Panc1 (cell line): ENCODE measurements at regions of chr1 and their contacts with region 1.

Region 1: GRCh38 chr1:84506002-84506728 is at the starts of genes GNG5 and SPATA1:
- DNase-seq: peak; percentile 94
- ATAC-seq: peak; percentile 95
- H3K4me3 ChIP-seq: peak within 1 kb of the TSS; percentile 79 to 91
- H3K27ac ChIP-seq: peak within 1 kb of the TSS; percentile 98
- H3K4me1 ChIP-seq: peaks cover 32% of the 10 kb centered on the region
- H3K27me3 ChIP-seq: no peaks in the 10 kb centered on the region
- CTCF ChIP-seq: no peak
- total RNA-seq, gene GNG5: 283 TPM
- total RNA-seq, gene SPATA1: 5.0 TPM

Region 2: DNA sequence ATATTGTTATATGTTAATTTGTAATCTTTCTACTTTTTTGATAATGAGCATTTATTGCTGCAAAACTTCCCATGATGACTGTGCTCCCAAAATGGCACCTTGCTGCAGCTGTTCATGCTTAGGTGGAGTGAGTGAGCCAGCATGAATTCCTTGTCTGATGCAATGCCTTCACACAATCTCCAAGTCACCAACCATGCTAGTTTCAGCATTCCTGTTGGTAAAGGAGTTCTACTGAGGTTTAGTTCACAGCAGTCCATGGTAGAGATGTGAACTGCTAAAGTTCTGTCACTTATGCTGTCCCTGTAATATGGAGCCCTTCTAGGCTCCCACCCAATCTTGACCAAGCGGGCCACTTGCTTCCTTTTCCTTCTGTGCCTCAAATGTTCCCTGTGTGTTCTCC is 388.3 kb before region 1 on chr1:
- CTCF ChIA-PET with region 1: no interaction called
- POLR2A ChIA-PET with region 1: interaction called, 18 read pairs
- in situ Hi-C with region 1: no loop called
- intact Hi-C with region 1: no loop called
- DNase-seq: no peak
- ATAC-seq: no peak
- H3K4me3 ChIP-seq: no peak overlapping the region
- H3K27ac ChIP-seq: no peak overlapping the region
- H3K4me1 ChIP-seq: no peaks in the 10 kb centered on the region
- H3K27me3 ChIP-seq: no peaks in the 10 kb centered on the region
- CTCF ChIP-seq: no peak; the same call in 1 of the 2 replicates

Region 3: DNA sequence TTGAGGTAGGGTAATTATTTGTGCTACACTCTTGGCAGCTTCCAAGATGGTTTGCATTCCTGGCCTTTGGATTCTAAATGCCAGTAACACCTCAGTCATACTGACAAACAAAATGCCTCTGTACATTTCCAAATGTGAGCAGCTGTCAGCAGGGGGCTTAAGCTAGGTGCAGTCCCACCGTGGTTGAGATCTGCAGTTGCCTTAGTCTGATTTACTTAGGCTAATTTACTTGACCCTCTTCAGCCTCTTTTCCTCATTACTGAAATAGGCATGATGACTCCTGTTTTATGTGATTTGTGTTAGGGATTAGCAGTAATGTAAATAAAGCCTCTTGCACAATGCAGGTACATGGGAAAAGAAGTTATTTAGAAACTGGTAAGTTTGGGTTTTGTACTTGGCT is 13.4 kb before region 1 on chr1:
- CTCF ChIA-PET with region 1: interaction called, 5 read pairs
- POLR2A ChIA-PET with region 1: interaction called, 3 read pairs
- in situ Hi-C with region 1: no loop called
- intact Hi-C with region 1: loop called (anchors 1 kb)
- DNase-seq: no peak
- ATAC-seq: no peak
- H3K4me3 ChIP-seq: no peak overlapping the region
- H3K27ac ChIP-seq: no peak overlapping the region
- H3K4me1 ChIP-seq: no peaks in the 10 kb centered on the region
- H3K27me3 ChIP-seq: no peaks in the 10 kb centered on the region
- CTCF ChIP-seq: 0 out of 2 replicates have a peak, but pooled peaks have one; percentile 28

Region 4: GRCh38 chr1:84541679-84542078 is 35.5 kb after region 1 on chr1:
- CTCF ChIA-PET with region 1: no interaction called
- POLR2A ChIA-PET with region 1: interaction called, 12 read pairs
- in situ Hi-C with region 1: no loop called
- intact Hi-C with region 1: no loop called
- DNase-seq: peak; percentile 17
- ATAC-seq: peak; percentile 61; the same call in 1 of the 2 replicates
- H3K4me3 ChIP-seq: no peak overlapping the region
- H3K27ac ChIP-seq: no peak overlapping the region; the same call in 1 of the 2 replicates
- H3K4me1 ChIP-seq: peaks cover 17% of the 10 kb centered on the region
- H3K27me3 ChIP-seq: no peaks in the 10 kb centered on the region
- CTCF ChIP-seq: peak; percentile 83

Region 5: DNA sequence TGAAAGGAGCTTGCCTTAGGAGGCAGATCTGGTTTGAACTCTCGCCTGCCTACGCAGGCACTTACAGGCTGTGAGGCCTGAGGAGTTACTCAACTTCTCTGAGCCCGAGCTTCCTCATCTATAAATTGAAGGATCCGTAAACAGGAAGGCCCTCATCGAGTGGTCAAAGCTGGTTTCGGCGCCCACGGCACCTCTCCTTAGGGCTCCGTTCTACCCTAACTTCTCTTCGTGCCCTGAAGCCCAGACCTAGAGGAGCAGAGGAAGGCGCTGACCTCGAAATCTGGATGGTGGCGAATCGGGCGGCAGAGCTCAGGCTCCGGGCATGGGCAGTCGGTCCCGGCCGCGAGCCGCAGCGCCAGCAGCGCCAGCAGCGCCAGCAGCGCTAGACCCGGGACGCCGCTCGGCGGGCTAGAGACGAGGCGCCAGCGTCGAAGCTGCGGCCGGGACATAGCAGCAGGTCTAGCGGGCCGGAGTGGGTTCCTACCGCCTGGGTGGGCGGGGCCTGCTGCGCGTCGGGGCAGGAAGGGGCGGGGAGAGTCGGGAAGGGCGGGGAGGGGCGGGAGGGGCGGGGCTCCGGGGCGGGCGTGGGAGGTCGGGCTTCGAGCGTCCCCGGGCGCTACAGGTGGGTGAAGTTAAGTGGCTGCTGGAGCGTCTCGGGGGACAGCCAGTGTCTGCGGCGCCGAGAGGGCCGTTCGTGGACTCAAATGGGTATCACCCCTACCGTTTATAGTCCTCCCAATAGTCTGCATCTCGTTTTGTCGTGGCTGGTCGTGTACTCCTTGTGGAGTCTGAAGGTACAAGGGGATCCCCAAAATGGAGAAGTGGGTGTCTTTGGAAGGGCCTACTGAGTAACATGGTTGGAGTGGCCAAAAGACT is 68.0 kb after region 1 on chr1 and contains the start of gene CTBS:
- CTCF ChIA-PET with region 1: interaction called, 4 read pairs
- POLR2A ChIA-PET with region 1: interaction called, 10 read pairs
- in situ Hi-C with region 1: no loop called
- intact Hi-C with region 1: loop called (anchors 2 kb)
- DNase-seq: peak; percentile 74
- ATAC-seq: peak; percentile 97
- H3K4me3 ChIP-seq: peak within 1 kb of the TSS; percentile 66 to 81
- H3K27ac ChIP-seq: peak within 1 kb of the TSS; percentile 98
- H3K4me1 ChIP-seq: peaks cover 33% of the 10 kb centered on the region
- H3K27me3 ChIP-seq: no peaks in the 10 kb centered on the region
- CTCF ChIP-seq: no peak
- total RNA-seq, gene CTBS: 47.7 TPM

Region 6: DNA sequence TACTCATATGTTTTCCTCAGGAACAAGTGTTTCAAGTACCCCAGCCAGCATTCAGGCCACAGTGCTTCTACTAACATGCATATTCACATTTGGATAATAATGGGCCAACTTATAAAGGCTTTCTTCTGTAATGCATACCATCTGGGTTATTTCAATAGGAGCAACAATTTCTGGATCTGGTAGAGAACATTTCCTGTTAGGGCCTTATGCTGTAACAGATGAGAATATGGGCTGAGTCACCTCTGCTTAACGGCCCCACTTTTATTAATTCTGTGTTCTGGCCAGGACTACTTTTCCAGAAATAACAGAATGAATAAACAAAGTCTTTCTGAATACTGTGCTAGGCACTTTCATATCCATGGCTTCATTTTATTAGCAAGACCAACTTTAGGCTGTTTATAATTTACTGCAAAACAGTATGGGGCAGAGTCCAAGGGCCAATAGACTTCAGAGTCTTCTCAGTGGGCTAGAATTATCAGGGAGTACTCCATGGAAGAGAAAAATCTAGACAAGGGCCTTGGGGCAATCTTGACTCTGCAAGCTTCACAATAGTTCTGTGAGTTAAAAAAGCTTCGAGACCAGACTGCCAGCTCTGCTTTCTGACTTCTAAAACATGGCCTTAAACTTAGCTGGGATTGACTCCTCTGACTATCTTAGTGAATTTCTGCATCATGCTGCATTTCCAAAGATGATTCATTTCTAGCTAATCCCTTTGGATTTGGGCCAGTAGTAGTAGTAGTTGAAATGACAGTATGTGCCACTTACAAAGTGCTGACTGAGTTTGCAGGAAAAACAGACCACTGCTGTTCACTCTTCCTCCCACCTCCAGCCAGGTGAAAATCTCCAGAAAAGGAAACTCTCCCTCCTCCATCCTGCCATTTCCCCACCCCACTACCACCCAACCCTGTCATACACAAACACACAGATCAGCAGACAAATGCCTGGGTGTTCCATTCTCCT is 192.3 kb after region 1 on chr1:
- CTCF ChIA-PET with region 1: no interaction called
- POLR2A ChIA-PET with region 1: no interaction called
- in situ Hi-C with region 1: no loop called
- intact Hi-C with region 1: no loop called
- DNase-seq: peak; percentile 88
- ATAC-seq: peak; percentile 74
- H3K4me3 ChIP-seq: no peak overlapping the region
- H3K27ac ChIP-seq: no peak overlapping the region
- H3K4me1 ChIP-seq: peaks cover 9% of the 10 kb centered on the region
- H3K27me3 ChIP-seq: peaks cover 25% of the 10 kb centered on the region; the same call in 1 of the 2 replicates
- CTCF ChIP-seq: no peak; the same call in 1 of the 2 replicates

Region 7: DNA sequence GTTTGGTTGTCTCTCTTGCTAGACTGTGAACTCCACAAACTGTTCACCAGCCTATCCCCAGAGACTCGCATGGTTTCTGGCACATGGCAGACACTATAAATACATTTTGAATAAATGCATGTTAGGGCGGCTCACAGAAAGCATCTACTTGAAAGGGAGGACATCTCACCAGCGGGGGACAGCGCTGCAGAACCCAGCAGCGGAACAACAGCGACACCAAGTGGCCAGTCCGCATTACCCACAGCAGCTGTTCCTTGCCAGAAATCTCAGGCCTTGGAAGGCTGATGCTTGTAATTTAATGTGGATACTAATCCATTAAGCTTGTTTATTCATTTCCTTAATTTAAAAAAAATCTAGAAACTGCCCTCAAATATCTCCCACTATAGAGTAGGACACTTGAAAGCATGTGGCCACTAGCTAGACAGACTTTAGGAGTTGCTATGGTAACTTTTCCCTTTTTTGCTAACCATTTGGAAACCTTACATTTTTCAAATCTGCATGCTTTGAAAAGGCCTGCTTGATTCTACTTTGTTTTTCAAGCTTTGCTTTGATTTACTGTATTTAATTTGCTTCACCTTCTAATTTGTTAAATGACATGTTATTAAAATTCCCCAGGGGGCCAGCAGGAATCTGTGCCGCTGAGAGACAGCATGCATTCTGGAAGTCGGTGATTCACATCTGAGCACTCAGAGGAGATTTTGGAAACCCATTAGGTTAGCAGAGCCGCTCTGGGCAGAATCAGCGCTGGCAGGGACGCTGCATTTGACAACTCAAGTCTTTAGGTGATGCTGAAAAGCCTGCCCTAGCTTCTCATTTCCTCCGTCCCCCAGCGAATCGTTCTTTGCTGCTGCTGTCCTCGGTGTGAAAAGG is 247.6 kb after region 1 on chr1:
- CTCF ChIA-PET with region 1: interaction called, 3 read pairs
- POLR2A ChIA-PET with region 1: interaction called, 3 read pairs
- in situ Hi-C with region 1: no loop called
- intact Hi-C with region 1: loop called (anchors 5 kb)
- DNase-seq: peak; percentile 81
- ATAC-seq: peak; percentile 98
- H3K4me3 ChIP-seq: no peak overlapping the region
- H3K27ac ChIP-seq: no peak overlapping the region
- H3K4me1 ChIP-seq: no peaks in the 10 kb centered on the region; the same call in 1 of the 2 replicates
- H3K27me3 ChIP-seq: peaks cover 4% of the 10 kb centered on the region; the same call in 1 of the 2 replicates
- CTCF ChIP-seq: peak; percentile 100